Ascending aorta (tissue), 2 donors: ENCODE measurements at regions of chr7 and their contacts with region 1.

Region 1: DNA sequence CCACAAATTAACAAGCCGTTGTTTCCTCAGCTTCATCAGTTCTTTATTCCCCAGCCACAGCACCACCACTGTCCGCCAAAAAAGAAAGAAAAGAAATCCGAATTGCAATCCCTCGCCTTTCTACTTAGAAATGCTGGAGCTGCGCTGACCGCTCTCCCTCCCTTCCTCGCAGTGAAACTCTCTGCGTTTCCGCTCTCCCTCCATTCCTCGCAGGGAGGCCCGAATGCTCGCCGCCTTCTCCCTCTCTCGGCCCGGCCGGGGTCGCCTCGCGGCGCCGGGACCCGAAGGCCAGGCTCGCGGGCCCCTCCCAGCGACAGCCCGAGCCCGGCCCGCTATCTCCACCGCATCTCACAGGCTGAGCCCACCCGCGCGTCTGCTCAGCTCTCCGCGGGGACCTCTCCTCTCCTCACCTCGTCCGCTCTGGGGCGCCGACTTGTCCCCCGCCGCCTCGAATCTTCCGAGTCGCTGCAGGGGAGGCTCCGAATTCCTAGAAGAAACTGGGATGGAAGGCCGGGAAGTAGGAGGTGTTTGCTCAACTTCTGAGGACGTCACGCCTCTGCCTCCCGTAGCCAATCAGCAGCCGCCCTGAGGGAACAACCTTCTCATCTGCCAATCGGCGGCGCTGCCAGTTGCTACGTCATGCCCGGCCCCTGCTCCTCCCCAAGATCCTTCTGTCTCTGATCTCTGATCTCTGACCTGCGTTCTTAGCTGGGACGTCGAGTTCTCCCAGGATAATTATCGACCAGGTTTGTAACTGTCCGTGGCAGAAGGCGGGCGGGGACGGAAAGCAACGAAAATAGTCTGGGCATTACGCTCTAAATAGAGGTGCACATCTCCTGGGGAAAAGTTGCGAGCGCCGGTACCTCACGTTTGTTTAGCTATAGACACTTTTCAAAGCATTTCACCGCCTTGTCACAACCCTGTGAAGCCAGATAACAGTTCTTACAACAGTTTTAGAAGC is at the start of gene AASS:
- DNase-seq: peak; percentile 88 to 98
- H3K4me3 ChIP-seq: peak within 1 kb of the TSS; percentile 67 to 92
- H3K27ac ChIP-seq: peak within 1 kb of the TSS; percentile 99
- H3K4me1 ChIP-seq: peaks cover 0 to 12% of the 10 kb centered on the region in 2 donors
- H3K27me3 ChIP-seq: no peaks in the 10 kb centered on the region
- CTCF ChIP-seq: no peak
- total RNA-seq, gene AASS: 34.3 TPM

Region 2: GRCh38 chr7:120950539-120951308 is 1193.3 kb before region 1 on chr7 and contains the start of gene ING3:
- intact Hi-C with region 1: loop called (anchors 10 kb)
- DNase-seq: peak; percentile 94 to 99
- H3K4me3 ChIP-seq: peak within 1 kb of the TSS; percentile 73 to 77
- H3K27ac ChIP-seq: peak within 1 kb of the TSS; percentile 91 to 99
- H3K4me1 ChIP-seq: peaks cover 5 to 12% of the 10 kb centered on the region in 2 donors
- H3K27me3 ChIP-seq: no peaks in the 10 kb centered on the region
- CTCF ChIP-seq: no peak
- total RNA-seq, gene ING3: 6.8 TPM

Region 3: DNA sequence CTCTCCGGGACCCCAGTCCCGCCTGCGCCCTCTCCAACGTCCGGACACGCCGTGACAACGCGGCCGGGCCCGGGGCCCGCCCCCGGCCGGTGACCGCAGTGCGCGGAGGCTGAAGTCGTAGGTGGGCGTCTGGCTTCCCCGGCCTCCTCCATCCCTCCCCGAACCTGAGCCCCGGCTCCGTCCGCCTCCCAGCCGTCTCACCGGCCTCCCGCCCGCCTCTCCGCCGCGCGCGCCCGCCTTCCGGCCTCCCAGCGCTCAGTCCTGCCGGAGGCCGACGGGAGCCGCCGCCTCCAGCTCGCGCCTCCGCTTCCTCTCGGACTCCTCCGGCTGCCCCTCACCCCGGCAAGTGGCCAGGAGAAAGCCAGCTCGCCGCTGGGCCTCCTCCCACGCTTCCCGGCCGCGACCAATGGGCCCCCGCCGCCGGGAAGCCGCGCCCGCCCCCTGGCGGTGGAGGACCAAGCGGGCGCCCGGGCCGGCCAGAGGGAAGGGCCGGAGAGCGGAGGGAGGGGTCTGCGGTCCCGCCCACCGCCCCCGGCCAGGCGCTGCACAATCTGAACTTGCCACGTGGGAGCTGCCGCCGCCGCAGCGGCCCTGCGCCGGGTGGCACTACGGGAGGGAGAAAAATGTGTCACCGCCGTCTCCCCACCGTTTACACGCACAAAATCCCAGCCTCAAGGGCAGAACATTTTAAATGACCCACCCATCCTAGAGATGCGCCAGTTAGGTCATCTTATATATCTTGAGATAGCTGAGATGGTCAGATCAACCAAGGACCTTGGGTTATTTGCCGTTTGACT is 747.9 kb before region 1 on chr7 and contains the start of gene FAM3C:
- intact Hi-C with region 1: loop called (anchors 5 kb)
- DNase-seq: peak; percentile 75 to 95
- H3K4me3 ChIP-seq: peak within 1 kb of the TSS; percentile 93 to 100
- H3K27ac ChIP-seq: peak within 1 kb of the TSS; percentile 85 to 91
- H3K4me1 ChIP-seq: no peaks in the 10 kb centered on the region
- H3K27me3 ChIP-seq: no peaks in the 10 kb centered on the region
- CTCF ChIP-seq: peak; percentile 83 to 96 (median 92)
- total RNA-seq, gene FAM3C: 27.6 TPM

Region 4: DNA sequence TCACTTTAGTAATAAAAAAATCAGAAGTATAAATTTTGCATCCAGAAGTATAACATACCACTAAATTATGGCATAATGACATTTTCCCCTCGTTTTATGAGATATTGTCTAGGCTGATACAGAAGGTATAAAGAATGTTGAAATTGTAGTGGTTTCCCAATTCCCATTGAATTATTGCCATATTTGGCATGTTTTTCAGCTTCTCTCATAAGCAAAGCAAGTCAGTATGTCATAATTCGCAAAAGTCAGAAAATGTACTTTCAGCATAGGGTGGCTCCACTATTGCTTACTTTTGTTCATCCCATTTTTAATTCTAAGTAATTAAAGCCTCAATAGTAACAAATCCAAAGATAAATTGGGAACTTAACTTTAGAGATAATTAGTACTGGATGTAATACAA is 290.7 kb before region 1 on chr7:
- intact Hi-C with region 1: loop called (anchors 10 kb)
- DNase-seq: no peak
- H3K4me3 ChIP-seq: no peak overlapping the region
- H3K27ac ChIP-seq: no peak overlapping the region
- H3K4me1 ChIP-seq: peaks cover 0 to 4% of the 10 kb centered on the region in 2 donors
- H3K27me3 ChIP-seq: no peaks in the 10 kb centered on the region
- CTCF ChIP-seq: no peak

Region 5: GRCh38 chr7:122166708-122167107 is 22.7 kb after region 1 on chr7:
- intact Hi-C with region 1: loop called (anchors 2 kb)
- DNase-seq: no peak
- H3K4me3 ChIP-seq: no peak overlapping the region
- H3K27ac ChIP-seq: no peak overlapping the region
- H3K4me1 ChIP-seq: peaks cover 0 to 3% of the 10 kb centered on the region in 2 donors
- H3K27me3 ChIP-seq: no peaks in the 10 kb centered on the region
- CTCF ChIP-seq: no peak

Region 6: DNA sequence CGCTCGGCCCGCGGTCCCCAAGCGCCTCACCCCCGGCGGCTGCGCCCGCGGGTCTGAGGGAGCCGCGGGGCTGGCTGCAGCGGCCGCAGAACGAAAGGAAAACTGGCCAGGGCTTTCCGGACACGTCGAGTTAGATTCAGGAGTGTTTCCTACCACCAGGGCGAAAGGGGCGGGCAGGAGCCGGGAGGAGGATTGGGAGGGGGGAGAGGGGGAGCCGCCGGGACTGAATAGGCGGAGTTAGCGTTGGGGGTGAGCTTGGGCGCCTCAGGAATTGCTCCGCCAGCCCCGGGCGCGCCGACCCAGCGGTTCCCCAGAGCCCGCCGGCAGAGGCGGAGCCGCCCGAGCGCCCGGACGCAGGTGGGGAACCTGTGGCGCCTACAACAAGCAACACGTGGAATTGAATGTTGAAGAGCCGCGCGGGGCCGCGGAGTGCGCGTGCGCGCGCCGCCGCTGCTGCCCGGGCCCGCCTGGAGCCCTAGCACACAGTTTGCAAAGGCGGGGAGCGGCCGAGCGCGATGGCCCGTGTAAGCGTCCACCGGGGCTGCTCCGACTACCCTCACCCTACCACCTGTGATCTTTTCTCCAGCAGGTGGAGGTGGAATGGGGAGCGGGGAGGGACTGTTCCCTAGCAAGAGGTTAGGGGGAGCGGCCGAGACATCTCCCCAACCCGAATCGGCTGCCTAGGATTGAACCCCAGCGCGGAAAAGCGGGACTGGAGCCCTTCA is 742.5 kb after region 1 on chr7 and contains the start of gene CADPS2:
- intact Hi-C with region 1: loop called (anchors 10 kb)
- DNase-seq: peak; percentile 31 to 86
- H3K4me3 ChIP-seq: peak within 1 kb of the TSS; percentile 92 to 96
- H3K27ac ChIP-seq: peak within 1 kb of the TSS; percentile 92 to 94
- H3K4me1 ChIP-seq: peaks cover 0 to 3% of the 10 kb centered on the region in 2 donors
- H3K27me3 ChIP-seq: no peaks in the 10 kb centered on the region
- CTCF ChIP-seq: peak in 2 of 3 experiments; percentile 21 to 27
- total RNA-seq, gene CADPS2: 31.8 TPM

Region 7: GRCh38 chr7:123534383-123535260 is 1390.6 kb after region 1 on chr7 and contains the start of gene IQUB:
- intact Hi-C with region 1: loop called (anchors 10 kb)
- DNase-seq: peak; percentile 84 to 99
- H3K4me3 ChIP-seq: peak within 1 kb of the TSS; percentile 66 to 68
- H3K27ac ChIP-seq: peak within 1 kb of the TSS; percentile 84 to 85
- H3K4me1 ChIP-seq: peaks cover 0 to 6% of the 10 kb centered on the region in 2 donors
- H3K27me3 ChIP-seq: no peaks in the 10 kb centered on the region
- CTCF ChIP-seq: no peak
- total RNA-seq, gene IQUB: not detected